A673 (cell line): ENCODE measurements at regions of chr17 and their contacts with region 1.

Region 1: GRCh38 chr17:29331708-29332085 is 37.7 kb upstream of the NUFIP2 start:
- DNase-seq: no peak
- H3K4me3 ChIP-seq: no peak overlapping the region
- H3K27ac ChIP-seq: no peak overlapping the region
- H3K4me1 ChIP-seq: no peaks in the 10 kb centered on the region
- H3K27me3 ChIP-seq: no peaks in the 10 kb centered on the region
- CTCF ChIP-seq: no peak

Region 2: GRCh38 chr17:29342158-29342745 is 10.6 kb after region 1 on chr17:
- CTCF ChIA-PET with region 1: no interaction called
- POLR2A ChIA-PET with region 1: interaction called, 15 read pairs
- intact Hi-C with region 1: no loop called
- DNase-seq: no peak
- H3K4me3 ChIP-seq: no peak overlapping the region
- H3K27ac ChIP-seq: no peak overlapping the region
- H3K4me1 ChIP-seq: no peaks in the 10 kb centered on the region
- H3K27me3 ChIP-seq: peaks cover 9% of the 10 kb centered on the region
- CTCF ChIP-seq: no peak

Region 3: GRCh38 chr17:29524460-29525091 is 192.9 kb after region 1 on chr17:
- CTCF ChIA-PET with region 1: no interaction called
- POLR2A ChIA-PET with region 1: interaction called, 10 read pairs
- intact Hi-C with region 1: no loop called
- DNase-seq: no peak
- H3K4me3 ChIP-seq: no peak overlapping the region
- H3K27ac ChIP-seq: no peak overlapping the region
- H3K4me1 ChIP-seq: no peaks in the 10 kb centered on the region
- H3K27me3 ChIP-seq: no peaks in the 10 kb centered on the region
- CTCF ChIP-seq: no peak